Activated CD4-positive, alpha-beta memory T cell treated with anti-CD3 and anti-CD28 coated beads, Interleukin-2, amount 10 ng/mL, durations not matched to agents 7 days and 5 days (primary cell): ENCODE measurements at regions of chr7 and their contacts with region 1.

Region 1: DNA sequence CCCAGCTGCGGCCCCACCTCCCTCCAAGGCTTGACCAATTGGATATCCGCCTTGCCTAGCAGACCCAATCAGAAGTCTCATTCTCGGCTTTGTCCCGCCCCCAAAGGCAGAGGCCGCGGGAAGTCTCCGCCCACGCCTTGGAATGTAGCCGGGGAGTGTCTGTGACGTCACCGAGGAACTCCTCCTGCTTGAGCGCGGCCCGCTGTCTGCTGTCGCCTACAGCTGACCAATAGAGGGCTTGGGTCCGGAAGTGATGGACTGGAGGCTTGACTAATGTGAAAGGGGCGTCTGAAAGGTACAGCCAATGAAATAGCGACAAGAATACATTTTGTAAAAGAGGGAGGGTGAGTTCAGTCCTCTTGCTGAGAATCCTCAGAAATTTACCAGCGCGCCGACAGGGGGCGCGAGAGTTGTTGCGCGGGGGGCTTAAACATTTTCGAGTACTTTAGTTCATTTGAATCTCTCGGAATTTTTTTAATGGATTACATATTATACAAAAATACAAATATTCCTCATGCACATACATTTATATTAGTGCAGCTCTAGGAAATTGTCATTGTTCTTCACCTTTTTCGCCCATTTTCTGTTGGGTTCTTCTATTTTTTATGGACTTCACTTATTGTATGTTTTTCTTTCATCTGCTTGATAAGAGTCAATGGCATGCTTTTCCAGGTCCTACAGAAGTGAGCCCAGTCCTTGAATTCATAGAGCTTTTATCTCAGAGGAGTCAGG is 376 bp upstream of the CREB3L2 start:
- DNase-seq: peak; percentile 98
- H3K4me3 Mint-ChIP-seq: peak overlapping the region; percentile 92
- H3K27ac Mint-ChIP-seq: peak overlapping the region; percentile 89
- H3K4me1 Mint-ChIP-seq: peaks cover 34% of the 10 kb centered on the region
- H3K27me3 Mint-ChIP-seq: no peaks in the 10 kb centered on the region

Region 2: GRCh38 chr7:137717811-137718271 is 284.4 kb before region 1 on chr7:
- CTCF ChIA-PET with region 1: no interaction called
- POLR2A ChIA-PET with region 1: no interaction called
- DNase-seq: no peak
- H3K4me3 Mint-ChIP-seq: no peak overlapping the region
- H3K27ac Mint-ChIP-seq: no peak overlapping the region
- H3K4me1 Mint-ChIP-seq: no peaks in the 10 kb centered on the region
- H3K27me3 Mint-ChIP-seq: peaks cover 3% of the 10 kb centered on the region

Region 3: GRCh38 chr7:137915266-137915665 is 87.0 kb before region 1 on chr7:
- CTCF ChIA-PET with region 1: interaction called, 13 read pairs
- POLR2A ChIA-PET with region 1: interaction called, 5 read pairs
- DNase-seq: no peak
- H3K4me3 Mint-ChIP-seq: no peak overlapping the region
- H3K27ac Mint-ChIP-seq: no peak overlapping the region
- H3K4me1 Mint-ChIP-seq: peaks cover 10% of the 10 kb centered on the region
- H3K27me3 Mint-ChIP-seq: no peaks in the 10 kb centered on the region

Region 4: DNA sequence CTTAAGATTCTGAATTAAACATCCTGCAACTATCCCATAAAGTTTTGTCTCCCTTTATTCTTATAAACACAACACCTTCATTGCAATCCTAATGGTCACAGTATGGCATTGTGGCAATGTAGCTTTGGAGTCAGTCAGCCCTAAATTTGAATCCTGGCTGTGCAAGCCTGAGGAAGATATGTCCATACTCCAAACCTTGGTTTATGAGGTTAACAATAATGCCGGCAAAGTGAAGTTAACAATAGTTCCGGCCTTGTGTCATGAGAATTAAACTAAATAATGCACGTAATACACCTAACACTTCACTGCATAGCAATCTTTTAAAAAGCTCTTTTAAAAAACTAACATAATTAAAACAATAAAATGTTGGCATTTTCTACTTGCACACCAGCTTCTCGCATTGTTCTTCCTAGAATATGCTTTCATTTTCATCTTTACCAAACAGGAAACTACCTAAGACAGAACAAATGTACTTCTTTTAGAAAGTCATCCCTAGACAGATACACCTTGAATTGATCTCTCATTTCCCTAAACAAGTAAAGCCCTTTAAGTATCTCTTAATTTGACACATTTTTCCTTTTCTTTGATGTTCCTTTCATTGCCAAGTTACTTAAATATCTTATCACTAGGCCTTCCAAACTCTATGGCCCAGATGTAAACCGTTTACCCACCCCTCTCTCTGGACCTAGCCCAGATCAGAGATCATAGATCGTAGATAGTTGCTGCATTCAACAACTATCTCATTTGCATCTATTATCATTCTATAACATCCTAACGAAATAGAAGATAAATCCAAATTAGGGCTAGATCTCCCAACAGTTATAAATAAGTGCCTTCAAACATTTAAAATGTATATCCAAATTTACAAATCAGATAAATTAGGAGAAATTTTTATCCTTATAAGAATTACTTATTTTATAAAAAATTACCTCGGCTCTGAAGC is 67.0 kb before region 1 on chr7:
- CTCF ChIA-PET with region 1: interaction called, 38 read pairs
- POLR2A ChIA-PET with region 1: interaction called, 54 read pairs
- DNase-seq: no peak
- H3K4me3 Mint-ChIP-seq: peak overlapping the region; percentile 81
- H3K27ac Mint-ChIP-seq: peak overlapping the region; percentile 92
- H3K4me1 Mint-ChIP-seq: peaks cover 40% of the 10 kb centered on the region
- H3K27me3 Mint-ChIP-seq: no peaks in the 10 kb centered on the region

Region 5: GRCh38 chr7:138015096-138015495 is 12.8 kb after region 1 on chr7:
- CTCF ChIA-PET with region 1: interaction called, 20 read pairs
- POLR2A ChIA-PET with region 1: no interaction called
- DNase-seq: no peak
- H3K4me3 Mint-ChIP-seq: no peak overlapping the region
- H3K27ac Mint-ChIP-seq: no peak overlapping the region
- H3K4me1 Mint-ChIP-seq: no peaks in the 10 kb centered on the region
- H3K27me3 Mint-ChIP-seq: no peaks in the 10 kb centered on the region